Activated CD8-positive, alpha-beta memory T cell treated with anti-CD3 and anti-CD28 coated beads, Interleukin-2, amount 10 ng/mL, durations not matched to agents 7 days and 5 days (primary cell): ENCODE measurements at regions of chr10 and their contacts with region 1.

Region 1: DNA sequence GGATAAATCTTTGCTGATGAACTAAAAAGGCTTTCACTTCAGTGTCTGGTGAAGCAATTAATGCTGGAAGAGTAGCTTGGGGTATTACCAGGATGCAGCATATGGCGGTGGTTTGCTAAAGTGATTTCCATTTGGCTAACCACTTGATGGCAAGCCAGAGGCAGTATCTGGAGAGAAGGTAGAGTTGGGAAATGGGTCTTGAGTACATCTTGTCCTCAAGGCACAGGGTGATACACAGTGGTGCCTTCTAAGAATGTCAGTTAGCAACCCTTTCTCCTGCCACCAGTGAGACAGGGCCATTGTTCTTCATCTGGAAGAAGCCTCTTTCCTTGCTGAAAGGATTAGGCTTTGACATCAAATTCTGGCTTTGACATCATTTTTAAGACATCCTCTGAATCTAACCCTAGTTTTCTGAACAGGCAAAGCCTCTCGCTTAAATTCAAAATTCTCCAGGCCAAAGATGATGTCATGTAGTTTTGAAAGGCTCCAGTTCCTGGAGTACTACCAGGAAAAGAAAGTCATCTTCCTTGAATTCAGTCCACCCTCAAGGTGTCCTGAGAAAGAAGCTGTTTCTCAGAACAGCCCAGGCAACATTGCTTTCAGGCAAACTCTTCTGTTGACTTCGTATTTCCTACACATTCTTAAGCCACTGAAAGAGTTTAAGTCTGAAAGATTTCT is 162.4 kb downstream of the ARID5B start:
- DNase-seq: no peak
- ATAC-seq: peak; percentile 60
- H3K4me3 Mint-ChIP-seq: peak overlapping the region; percentile 11
- H3K27ac Mint-ChIP-seq: peak overlapping the region; percentile 86
- H3K4me1 Mint-ChIP-seq: peaks cover 80% of the 10 kb centered on the region
- H3K27me3 Mint-ChIP-seq: no peaks in the 10 kb centered on the region

Region 2: DNA sequence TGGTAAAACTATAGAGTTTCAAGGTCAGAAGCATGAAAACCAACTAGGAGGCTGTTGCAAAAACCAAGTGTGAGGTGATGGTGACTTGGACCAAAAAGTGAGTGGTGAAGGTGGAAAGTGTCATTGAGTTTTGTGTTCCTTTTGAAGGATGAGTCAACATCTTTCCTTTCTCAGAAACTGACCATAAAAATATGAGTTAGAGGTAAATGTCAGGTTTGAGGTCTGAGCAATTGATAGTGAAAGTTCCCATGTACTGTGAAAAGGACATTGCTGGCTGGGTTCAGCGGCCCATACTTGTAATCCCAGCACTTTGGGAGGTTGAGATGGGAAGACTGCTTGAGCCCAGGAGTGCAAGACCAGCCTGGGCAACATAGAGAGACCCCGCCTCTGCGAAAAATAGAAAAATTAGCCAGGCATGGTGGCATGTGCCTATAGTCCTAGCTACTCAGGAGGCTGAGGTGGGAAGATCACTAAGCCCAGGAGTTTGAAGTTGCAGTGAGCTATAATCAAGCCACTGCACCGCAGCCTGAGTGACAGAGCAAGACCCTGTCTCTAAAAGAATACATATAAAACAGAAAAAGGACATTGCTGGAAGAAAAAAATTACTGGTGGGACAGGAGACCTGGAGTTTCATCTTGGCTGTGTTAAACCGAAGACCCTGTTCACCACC is 251.7 kb before region 1 on chr10:
- CTCF ChIA-PET with region 1: no interaction called
- DNase-seq: no peak
- ATAC-seq: peak; percentile 61
- H3K4me3 Mint-ChIP-seq: no peak overlapping the region
- H3K27ac Mint-ChIP-seq: no peak overlapping the region
- H3K4me1 Mint-ChIP-seq: peaks cover 17% of the 10 kb centered on the region
- H3K27me3 Mint-ChIP-seq: no peaks in the 10 kb centered on the region

Region 3: DNA sequence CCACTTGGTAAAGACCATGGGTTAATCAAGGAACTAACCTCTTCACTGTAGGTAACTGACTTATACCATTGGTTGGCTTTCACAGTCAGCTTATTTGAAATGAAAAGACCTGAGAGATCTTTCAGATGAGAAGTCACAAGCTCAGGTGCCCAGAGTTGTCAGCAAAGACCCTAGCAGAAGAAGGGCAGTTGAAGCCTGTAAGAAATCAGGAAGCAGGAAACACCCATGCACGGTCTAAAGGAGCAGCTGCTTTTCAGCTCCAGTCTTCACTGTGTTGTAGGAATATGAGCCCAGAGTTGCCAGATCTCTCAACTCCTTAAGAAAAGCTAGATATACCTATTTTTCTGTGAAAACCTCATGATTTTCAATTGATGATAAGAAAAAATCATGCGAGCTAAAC is 32.4 kb before region 1 on chr10:
- CTCF ChIA-PET with region 1: no interaction called
- DNase-seq: no peak
- ATAC-seq: no peak
- H3K4me3 Mint-ChIP-seq: no peak overlapping the region
- H3K27ac Mint-ChIP-seq: peak overlapping the region; percentile 6
- H3K4me1 Mint-ChIP-seq: peaks cover 41% of the 10 kb centered on the region
- H3K27me3 Mint-ChIP-seq: no peaks in the 10 kb centered on the region

Region 4: DNA sequence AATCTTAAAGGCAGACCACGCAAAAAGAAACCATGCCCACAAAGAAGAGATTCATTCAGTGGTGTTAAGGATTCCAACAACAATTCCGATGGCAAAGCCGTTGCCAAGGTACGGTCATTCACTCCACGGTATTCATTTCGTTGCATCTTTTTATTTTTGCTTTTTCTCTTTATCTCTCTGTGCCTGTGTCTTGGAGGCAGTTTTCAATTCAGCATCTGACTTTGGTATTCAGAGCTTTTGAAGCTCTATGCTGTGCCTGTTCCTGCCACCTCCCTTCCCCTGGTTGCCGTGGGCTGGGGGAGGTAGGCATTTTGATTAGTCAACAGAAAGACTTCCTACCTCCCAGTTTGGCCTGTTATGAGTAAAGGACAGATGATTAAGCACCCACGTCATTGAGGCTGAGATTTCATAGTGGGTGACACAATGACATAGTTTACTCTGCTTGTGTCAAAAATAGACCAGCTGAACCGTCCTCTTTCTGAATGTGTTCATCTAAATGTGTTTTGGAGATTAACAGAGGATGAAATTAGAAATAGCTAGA is 13.0 kb before region 1 on chr10:
- CTCF ChIA-PET with region 1: interaction called, 13 read pairs
- DNase-seq: peak; percentile 92
- ATAC-seq: peak; percentile 60
- H3K4me3 Mint-ChIP-seq: peak overlapping the region; percentile 83
- H3K27ac Mint-ChIP-seq: peak overlapping the region; percentile 99
- H3K4me1 Mint-ChIP-seq: peaks cover 93% of the 10 kb centered on the region
- H3K27me3 Mint-ChIP-seq: no peaks in the 10 kb centered on the region